Activated T-helper 1 cell treated with anti-CD3 and anti-CD28 coated beads, Interleukin-12 subunit alpha, Interleukin-12 subunit beta, Interleukin-2, Interleukin-4 antibody, amounts not matched to agents 30 ng/mL and 10 ng/mL and 1 ng/mL, durations not matched to agents 14 hours and 24 hours and 36 hours (primary cell): ENCODE measurements at regions of chr9 and their contacts with region 1.

Region 1: DNA sequence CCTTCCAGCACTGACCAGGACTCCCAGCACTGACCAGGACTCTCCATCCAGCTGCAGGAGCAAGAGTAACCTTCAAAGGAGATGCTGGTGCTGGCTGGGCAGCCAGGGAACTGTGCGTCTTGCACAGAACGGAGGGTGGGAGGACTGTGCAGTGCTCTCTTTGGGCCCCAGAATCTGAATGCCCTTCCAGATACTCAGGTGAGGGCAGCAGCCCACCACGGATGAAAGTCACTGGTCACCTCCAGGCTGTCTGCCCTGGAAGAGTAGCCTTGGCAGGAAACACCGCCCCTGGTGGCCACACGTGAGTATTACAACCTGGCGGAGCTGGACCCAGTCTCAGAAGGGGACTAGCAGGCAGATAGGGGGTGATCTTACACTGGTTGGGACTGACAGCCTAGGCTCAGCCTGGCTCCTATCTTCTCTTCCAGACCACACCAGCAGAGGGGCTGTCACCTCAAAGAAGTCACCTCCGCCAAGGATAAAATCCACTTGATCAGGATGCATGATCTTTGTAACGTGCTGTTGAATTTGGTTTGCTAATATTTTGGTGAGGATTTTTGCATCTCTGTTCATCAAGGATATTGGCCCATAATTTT is 4.8 kb upstream of the SARDH start:
- DNase-seq: peak; percentile 58
- H3K4me3 Mint-ChIP-seq: no peak overlapping the region
- H3K27ac Mint-ChIP-seq: no peak overlapping the region
- H3K4me1 Mint-ChIP-seq: no peaks in the 10 kb centered on the region
- H3K27me3 Mint-ChIP-seq: peaks cover 14% of the 10 kb centered on the region

Region 2: DNA sequence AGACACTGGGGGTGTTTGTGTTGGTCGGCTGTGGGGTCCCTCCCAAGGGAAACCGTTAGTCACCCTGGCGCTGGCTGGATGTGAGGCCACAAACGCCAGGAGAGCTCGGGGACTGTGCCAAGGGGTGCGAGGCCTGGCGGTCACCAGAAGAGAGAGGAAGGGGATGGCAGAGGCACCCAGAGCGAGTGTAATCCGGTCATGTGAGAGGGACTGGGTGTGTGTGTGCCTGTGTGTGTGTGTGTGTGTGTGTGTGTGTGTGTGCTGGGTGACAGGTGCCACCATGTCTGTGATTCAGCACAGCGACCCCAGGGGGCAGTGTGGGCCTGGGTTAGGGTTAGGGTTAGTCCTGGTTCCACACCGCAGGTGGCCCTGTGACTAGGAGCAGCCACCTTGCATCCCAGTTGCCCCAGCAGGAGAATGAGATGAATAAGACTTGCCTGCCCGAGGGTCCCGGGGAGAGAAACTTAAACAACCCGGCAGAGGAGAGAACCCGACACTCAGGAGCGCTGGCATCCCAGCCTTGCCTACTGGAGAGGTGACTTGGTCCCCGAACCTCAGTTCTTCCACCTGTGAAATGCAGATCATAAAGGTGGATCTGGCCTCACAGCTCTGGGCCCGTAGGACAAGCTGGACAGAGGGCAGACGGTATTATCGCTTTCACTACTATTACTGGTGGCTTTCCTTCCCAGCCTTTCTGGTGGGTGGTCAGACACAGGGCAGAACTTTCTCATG is 209.8 kb before region 1 on chr9:
- intact Hi-C with region 1: loop called (anchors 1 kb)
- DNase-seq: peak; percentile 24
- H3K4me3 Mint-ChIP-seq: no peak overlapping the region
- H3K27ac Mint-ChIP-seq: no peak overlapping the region
- H3K4me1 Mint-ChIP-seq: no peaks in the 10 kb centered on the region
- H3K27me3 Mint-ChIP-seq: peaks cover 11% of the 10 kb centered on the region

Region 3: GRCh38 chr9:133589454-133590227 is 153.3 kb before region 1 on chr9:
- intact Hi-C with region 1: loop called (anchors 5 kb)
- DNase-seq: peak; percentile 14
- H3K4me3 Mint-ChIP-seq: no peak overlapping the region
- H3K27ac Mint-ChIP-seq: no peak overlapping the region
- H3K4me1 Mint-ChIP-seq: no peaks in the 10 kb centered on the region
- H3K27me3 Mint-ChIP-seq: peaks cover 14% of the 10 kb centered on the region

Region 4: DNA sequence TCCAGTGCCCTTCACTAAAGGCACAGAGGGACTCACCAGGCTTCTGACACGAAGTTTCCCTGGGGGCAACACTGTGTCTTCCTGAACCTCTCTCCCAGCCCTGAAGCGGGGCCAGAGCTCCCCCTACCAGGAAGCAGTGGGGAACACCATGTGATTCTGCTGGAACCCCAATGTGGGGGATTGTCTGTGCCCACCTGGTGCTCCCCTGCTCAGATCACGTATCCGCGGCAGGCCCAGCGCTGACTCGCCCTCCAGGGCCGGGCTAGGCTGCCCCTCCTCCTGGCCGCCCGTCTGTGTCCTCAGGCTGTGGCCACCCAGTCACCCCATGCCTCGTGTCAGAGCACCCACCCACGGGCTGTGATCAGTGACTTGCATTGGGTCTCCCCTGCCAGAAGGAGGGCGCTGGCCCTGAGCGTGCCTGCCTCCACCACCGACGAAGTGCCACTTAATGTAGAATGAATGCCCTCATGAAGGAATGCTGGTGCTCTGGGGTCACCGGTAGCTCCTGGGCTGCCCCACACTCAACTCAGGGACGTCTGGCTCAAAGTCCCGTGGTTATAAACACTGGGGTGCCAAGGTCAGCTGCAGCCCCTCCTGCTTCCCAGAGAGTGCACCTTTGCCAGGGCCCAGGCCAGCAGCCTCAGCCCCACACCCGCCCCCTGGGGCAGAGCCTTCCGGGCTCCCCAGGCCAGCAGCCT is 26.9 kb before region 1 on chr9:
- intact Hi-C with region 1: no loop called
- DNase-seq: no peak
- H3K4me3 Mint-ChIP-seq: no peak overlapping the region
- H3K27ac Mint-ChIP-seq: no peak overlapping the region
- H3K4me1 Mint-ChIP-seq: no peaks in the 10 kb centered on the region
- H3K27me3 Mint-ChIP-seq: no peaks in the 10 kb centered on the region